ENCODE measurements at regions of chr1 and their contacts with region 1.

Region 1: DNA sequence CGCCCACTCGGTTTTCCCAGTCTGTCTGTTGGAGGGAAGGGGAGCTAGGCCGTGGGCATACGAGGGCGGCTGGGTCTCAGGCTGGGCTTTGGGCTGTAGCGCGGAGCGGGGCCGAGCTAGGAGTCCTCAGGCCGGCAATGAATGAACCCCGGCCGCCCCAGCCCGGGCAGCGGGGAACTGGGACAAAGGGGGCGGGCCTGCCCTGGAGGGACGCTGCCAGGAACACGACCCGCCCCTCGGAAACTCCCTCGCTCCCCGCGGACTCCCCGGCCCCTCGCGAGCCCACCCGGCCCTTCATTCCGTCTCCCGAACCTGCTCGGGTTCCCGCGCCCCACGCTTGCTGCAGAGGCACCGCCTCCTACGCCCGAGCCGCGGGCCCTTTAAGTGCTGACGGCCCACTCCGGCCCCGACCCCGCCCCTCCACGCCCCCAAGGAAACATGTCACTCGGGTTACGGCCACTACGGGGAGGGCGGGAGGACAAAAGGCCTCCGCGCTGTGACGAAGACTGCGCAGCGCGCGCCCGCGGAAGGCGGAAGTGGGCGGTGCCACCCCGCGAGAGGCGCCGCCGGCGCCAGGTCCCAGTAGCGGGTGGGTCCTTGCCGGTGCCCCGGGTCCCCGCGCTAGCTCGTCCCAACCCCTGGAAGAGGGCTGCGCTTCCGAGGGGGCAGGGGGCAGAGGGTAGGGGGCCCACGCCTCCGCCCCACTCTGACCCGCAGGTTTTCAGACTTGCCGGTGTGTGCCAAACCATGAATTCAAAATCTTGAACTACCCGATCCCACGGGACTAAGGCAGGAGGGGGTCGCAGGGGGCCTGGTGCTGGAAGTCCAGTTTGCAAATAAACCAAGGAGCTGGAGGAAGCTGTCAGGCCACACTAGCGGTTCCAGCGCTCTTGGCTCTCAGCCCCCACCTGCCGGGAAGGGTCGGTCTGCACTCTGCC is at the start of gene GALE:
- DNase-seq: peak; percentile 68
- ATAC-seq: peak; percentile 93
- H3K4me3 ChIP-seq: peak within 1 kb of the TSS; percentile 80
- H3K27ac ChIP-seq: peak within 1 kb of the TSS; percentile 70
- H3K4me1 ChIP-seq: peaks cover 9% of the 10 kb centered on the region
- H3K27me3 ChIP-seq: no peaks in the 10 kb centered on the region
- CTCF ChIP-seq: no peak
- EP300 ChIP-seq: no peak
- POLR2A ChIP-seq: peak; percentile 83
- RAD21 ChIP-seq: no peak
- polyA plus RNA-seq, gene GALE: 4.2 to 10.0 TPM

Region 2: GRCh38 chr1:23772049-23772853 is 28.4 kb before region 1 on chr1:
- CTCF ChIA-PET with region 1: interaction called, 13 read pairs
- POLR2A ChIA-PET with region 1: no interaction called
- RAD21 ChIA-PET with region 1: interaction called, 11 read pairs
- SMC1A ChIA-PET with region 1: interaction called, 13 read pairs
- in situ Hi-C with region 1: no loop called
- intact Hi-C with region 1: no loop called
- DNase-seq: peak; percentile 27
- ATAC-seq: peak; percentile 99
- H3K4me3 ChIP-seq: no peak overlapping the region
- H3K27ac ChIP-seq: no peak overlapping the region
- H3K4me1 ChIP-seq: peaks cover 12% of the 10 kb centered on the region
- H3K27me3 ChIP-seq: no peaks in the 10 kb centered on the region
- CTCF ChIP-seq: peak; percentile 97 to 98 (median 98); a peak in 5 of 6 replicates
- EP300 ChIP-seq: no peak
- POLR2A ChIP-seq: no peak
- RAD21 ChIP-seq: peak; percentile 91

Region 3: GRCh38 chr1:23777979-23778814 is 22.5 kb before region 1 on chr1 and contains the start of gene PITHD1:
- CTCF ChIA-PET with region 1: interaction called, 5 read pairs
- POLR2A ChIA-PET with region 1: interaction called, 10 read pairs
- RAD21 ChIA-PET with region 1: interaction called, 11 read pairs
- SMC1A ChIA-PET with region 1: interaction called, 13 read pairs
- in situ Hi-C with region 1: no loop called
- intact Hi-C with region 1: no loop called
- DNase-seq: peak; percentile 45
- ATAC-seq: peak; percentile 96
- H3K4me3 ChIP-seq: peak within 1 kb of the TSS; percentile 99
- H3K27ac ChIP-seq: peak within 1 kb of the TSS; percentile 82
- H3K4me1 ChIP-seq: peaks cover 10% of the 10 kb centered on the region; the same call in 1 of the 2 replicates
- H3K27me3 ChIP-seq: no peaks in the 10 kb centered on the region
- CTCF ChIP-seq: no peak
- EP300 ChIP-seq: no peak
- POLR2A ChIP-seq: peak; percentile 98
- RAD21 ChIP-seq: no peak
- polyA plus RNA-seq, gene PITHD1: 23.7 to 43.3 TPM

Region 4: DNA sequence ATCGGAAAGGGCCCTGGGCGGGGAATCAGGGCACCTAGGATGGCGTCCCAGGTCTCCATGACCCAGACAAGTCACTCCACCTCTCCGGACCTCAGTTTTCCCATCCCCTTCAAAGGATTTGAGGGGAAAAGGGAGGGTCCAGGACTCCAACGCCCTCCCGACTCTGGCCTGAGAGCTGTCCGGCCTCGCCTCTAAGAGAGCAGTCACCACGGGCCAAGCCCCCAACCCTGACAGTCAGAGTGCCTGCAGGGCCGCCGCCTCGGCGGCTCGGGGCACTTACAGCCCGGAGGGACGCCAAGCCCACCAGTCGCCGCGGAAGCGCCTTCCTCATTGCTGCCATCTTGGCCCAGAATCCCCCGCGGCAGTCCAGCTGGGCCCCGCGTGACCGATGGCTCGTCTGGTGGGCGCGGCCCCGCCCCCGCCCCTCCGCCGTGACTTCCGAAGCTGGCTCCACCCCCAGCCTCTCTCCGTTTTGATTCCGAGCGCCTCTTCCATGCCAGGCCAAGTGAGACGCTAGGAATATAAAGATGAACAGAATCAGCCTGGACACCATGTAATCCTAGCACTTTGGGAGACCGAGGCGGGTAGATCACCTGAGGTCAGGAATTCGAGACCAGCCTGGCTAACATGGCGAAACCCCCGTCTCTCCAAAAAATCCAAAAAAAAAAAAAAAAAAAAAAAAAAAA is 24.6 kb after region 1 on chr1 and contains the start of gene HMGCL:
- CTCF ChIA-PET with region 1: interaction called, 4 read pairs
- POLR2A ChIA-PET with region 1: interaction called, 19 read pairs
- RAD21 ChIA-PET with region 1: no interaction called
- SMC1A ChIA-PET with region 1: interaction called, 6 read pairs
- in situ Hi-C with region 1: no loop called
- intact Hi-C with region 1: no loop called
- DNase-seq: peak; percentile 55
- ATAC-seq: peak; percentile 99
- H3K4me3 ChIP-seq: peak within 1 kb of the TSS; percentile 83
- H3K27ac ChIP-seq: peak within 1 kb of the TSS; percentile 82
- H3K4me1 ChIP-seq: no peaks in the 10 kb centered on the region
- H3K27me3 ChIP-seq: no peaks in the 10 kb centered on the region
- CTCF ChIP-seq: no peak
- EP300 ChIP-seq: no peak
- POLR2A ChIP-seq: peak; percentile 99
- RAD21 ChIP-seq: no peak
- polyA plus RNA-seq, gene HMGCL: 75.9 to 127 TPM

Region 5: GRCh38 chr1:23867953-23868556 is 67.4 kb after region 1 on chr1 and contains the start of gene FUCA1:
- CTCF ChIA-PET with region 1: interaction called, 5 read pairs
- POLR2A ChIA-PET with region 1: no interaction called
- RAD21 ChIA-PET with region 1: no interaction called
- SMC1A ChIA-PET with region 1: no interaction called
- in situ Hi-C with region 1: loop called (anchors 10 kb)
- intact Hi-C with region 1: no loop called
- DNase-seq: peak; percentile 72
- ATAC-seq: peak; percentile 92
- H3K4me3 ChIP-seq: peak within 1 kb of the TSS; percentile 77
- H3K27ac ChIP-seq: peak within 1 kb of the TSS; percentile 63
- H3K4me1 ChIP-seq: peaks cover 10% of the 10 kb centered on the region
- H3K27me3 ChIP-seq: no peaks in the 10 kb centered on the region
- CTCF ChIP-seq: peak; percentile 94 to 96 (median 96)
- EP300 ChIP-seq: no peak
- POLR2A ChIP-seq: peak; percentile 91
- RAD21 ChIP-seq: peak; percentile 68
- polyA plus RNA-seq, gene FUCA1: 33.3 to 41.8 TPM

Region 6: DNA sequence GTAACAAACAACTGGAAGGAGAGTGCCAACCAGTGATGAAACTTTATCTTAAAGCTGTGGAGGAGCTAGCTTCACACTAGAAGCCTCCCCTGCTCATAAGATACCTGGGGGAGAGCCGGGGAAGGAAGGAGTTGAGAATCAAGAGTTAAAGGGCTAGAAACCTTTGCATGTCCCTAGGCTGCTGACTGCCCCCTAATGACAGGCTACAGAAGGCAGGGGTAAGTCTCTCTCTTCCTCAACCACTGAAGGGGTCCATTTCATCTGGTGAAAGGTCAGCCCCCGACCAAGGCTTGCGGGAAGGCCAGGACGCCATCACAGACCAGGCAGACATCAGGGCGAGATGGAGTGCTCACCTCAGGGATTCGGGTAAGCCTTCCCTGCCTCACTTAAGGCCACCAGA is 452.9 kb after region 1 on chr1:
- CTCF ChIA-PET with region 1: no interaction called
- POLR2A ChIA-PET with region 1: no interaction called
- RAD21 ChIA-PET with region 1: no interaction called
- SMC1A ChIA-PET with region 1: no interaction called
- in situ Hi-C with region 1: no loop called
- intact Hi-C with region 1: no loop called
- DNase-seq: no peak
- ATAC-seq: no peak
- H3K4me3 ChIP-seq: no peak overlapping the region
- H3K27ac ChIP-seq: no peak overlapping the region
- H3K4me1 ChIP-seq: no peaks in the 10 kb centered on the region
- H3K27me3 ChIP-seq: peaks cover 0 to 1% of the 10 kb centered on the region in 2 experiments; a peak in 1 of 4 replicates
- CTCF ChIP-seq: peak; percentile 9 to 27 (median 10); a peak in 3 of 6 replicates
- EP300 ChIP-seq: no peak
- POLR2A ChIP-seq: no peak
- RAD21 ChIP-seq: peak; percentile 43; the same call in 1 of the 2 replicates